ENCODE measurements at regions of chr6 and their contacts with region 1.

Region 1: GRCh38 chr6:170584181-170584953 is at the start of gene PDCD2:
- DNase-seq: peak; percentile 78 to 96 (median 92)
- ATAC-seq: peak; percentile 92
- H3K4me3 ChIP-seq: peak within 1 kb of the TSS; percentile 73 to 91
- H3K4me3 Mint-ChIP-seq: peak within 1 kb of the TSS; percentile 97
- H3K27ac ChIP-seq: peak within 1 kb of the TSS; percentile 77 to 89
- H3K27ac Mint-ChIP-seq: peak within 1 kb of the TSS; percentile 98
- H3K4me1 ChIP-seq: peaks cover 21% of the 10 kb centered on the region
- H3K4me1 Mint-ChIP-seq: peaks cover 33% of the 10 kb centered on the region
- H3K27me3 ChIP-seq: no peaks in the 10 kb centered on the region
- H3K27me3 Mint-ChIP-seq: no peaks in the 10 kb centered on the region
- CTCF ChIP-seq: no peak
- total RNA-seq, gene PDCD2: 43.9 to 46.3 TPM

Region 2: GRCh38 chr6:170464524-170464979 is 119.8 kb before region 1 on chr6:
- CTCF ChIA-PET with region 1: no interaction called
- POLR2A ChIA-PET with region 1: no interaction called
- intact Hi-C with region 1: loop called in 1 of 2 experiments (anchors 5 kb)
- DNase-seq: peak in 5 of 9 experiments; percentile 26 to 80 (median 48)
- ATAC-seq: peak; percentile 69
- H3K4me3 ChIP-seq: peak overlapping the region in 1 of 2 experiments; percentile 42
- H3K4me3 Mint-ChIP-seq: peak overlapping the region; percentile 51
- H3K27ac ChIP-seq: peak overlapping the region in 1 of 2 experiments; percentile 73
- H3K27ac Mint-ChIP-seq: no peak overlapping the region
- H3K4me1 ChIP-seq: peaks cover 43% of the 10 kb centered on the region
- H3K4me1 Mint-ChIP-seq: peaks cover 21% of the 10 kb centered on the region
- H3K27me3 ChIP-seq: no peaks in the 10 kb centered on the region
- H3K27me3 Mint-ChIP-seq: peaks cover 5% of the 10 kb centered on the region
- CTCF ChIP-seq: no peak

Region 3: DNA sequence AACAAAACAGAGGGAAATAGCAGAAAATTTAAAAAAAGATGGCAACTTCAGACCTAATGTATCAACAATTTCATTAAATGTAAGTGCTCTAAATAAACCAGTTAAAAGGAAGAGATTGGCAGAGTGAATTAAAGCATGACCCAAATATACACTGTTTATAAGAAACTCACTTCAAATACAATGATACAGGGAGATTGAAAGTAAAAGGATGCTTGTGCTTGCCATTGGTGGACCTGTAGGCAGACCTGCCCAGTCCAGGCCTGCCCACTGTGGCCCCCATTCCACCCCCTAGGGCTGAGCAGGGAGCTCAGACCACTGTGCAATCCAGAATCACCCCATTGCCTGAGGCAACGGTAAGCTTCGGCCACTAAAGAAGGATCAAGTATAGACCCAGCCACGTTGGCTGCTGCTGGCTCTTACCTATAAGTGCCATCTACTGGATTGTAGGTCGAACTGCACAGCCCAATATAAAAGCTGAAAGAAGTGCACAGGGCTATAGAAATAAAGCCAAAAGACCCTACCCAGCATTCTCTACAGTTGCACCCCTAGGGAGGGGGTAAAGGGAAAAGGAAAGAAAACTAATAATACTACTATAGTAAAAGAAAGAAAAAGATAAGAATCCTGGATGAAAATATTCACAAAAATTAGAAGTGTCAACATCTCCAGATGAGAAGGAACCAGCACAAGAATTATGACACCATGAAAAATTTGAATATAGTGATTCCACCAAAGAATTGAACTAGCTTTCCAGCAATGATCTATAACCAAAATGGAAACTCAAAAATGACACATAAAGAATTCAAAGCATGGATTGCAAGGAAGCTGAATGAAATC is 67.4 kb before region 1 on chr6:
- CTCF ChIA-PET with region 1: no interaction called
- POLR2A ChIA-PET with region 1: no interaction called
- intact Hi-C with region 1: no loop called
- DNase-seq: peak in 8 of 9 experiments; percentile 11 to 71 (median 35)
- ATAC-seq: peak; percentile 89
- H3K4me3 ChIP-seq: no peak overlapping the region
- H3K4me3 Mint-ChIP-seq: peak overlapping the region; percentile 58
- H3K27ac ChIP-seq: no peak overlapping the region
- H3K27ac Mint-ChIP-seq: no peak overlapping the region
- H3K4me1 ChIP-seq: no peaks in the 10 kb centered on the region
- H3K4me1 Mint-ChIP-seq: peaks cover 2% of the 10 kb centered on the region
- H3K27me3 ChIP-seq: no peaks in the 10 kb centered on the region
- H3K27me3 Mint-ChIP-seq: peaks cover 31% of the 10 kb centered on the region
- CTCF ChIP-seq: peak; percentile 87

Region 4: GRCh38 chr6:170554013-170554795 is 30.2 kb before region 1 on chr6 and contains the start of gene TBP:
- CTCF ChIA-PET with region 1: interaction called, 8 read pairs
- POLR2A ChIA-PET with region 1: interaction called, 33 read pairs
- intact Hi-C with region 1: loop called (anchors 1 kb)
- DNase-seq: peak; percentile 93 to 99 (median 98)
- ATAC-seq: peak; percentile 91
- H3K4me3 ChIP-seq: peak within 1 kb of the TSS; percentile 61 to 93
- H3K4me3 Mint-ChIP-seq: no peak within 1 kb of the TSS
- H3K27ac ChIP-seq: peak within 1 kb of the TSS; percentile 89 to 96
- H3K27ac Mint-ChIP-seq: no peak within 1 kb of the TSS
- H3K4me1 ChIP-seq: peaks cover 39% of the 10 kb centered on the region
- H3K4me1 Mint-ChIP-seq: peaks cover 38% of the 10 kb centered on the region
- H3K27me3 ChIP-seq: no peaks in the 10 kb centered on the region
- H3K27me3 Mint-ChIP-seq: no peaks in the 10 kb centered on the region
- CTCF ChIP-seq: no peak
- total RNA-seq, gene TBP: 13.8 to 13.9 TPM

Region 5: GRCh38 chr6:170572704-170573466 is 11.5 kb before region 1 on chr6:
- CTCF ChIA-PET with region 1: interaction called, 3 read pairs
- POLR2A ChIA-PET with region 1: interaction called, 11 read pairs
- intact Hi-C with region 1: no loop called
- DNase-seq: no peak
- ATAC-seq: no peak
- H3K4me3 ChIP-seq: no peak overlapping the region
- H3K4me3 Mint-ChIP-seq: no peak overlapping the region
- H3K27ac ChIP-seq: no peak overlapping the region
- H3K27ac Mint-ChIP-seq: peak overlapping the region; percentile 6
- H3K4me1 ChIP-seq: no peaks in the 10 kb centered on the region
- H3K4me1 Mint-ChIP-seq: peaks cover 2% of the 10 kb centered on the region
- H3K27me3 ChIP-seq: no peaks in the 10 kb centered on the region
- H3K27me3 Mint-ChIP-seq: no peaks in the 10 kb centered on the region
- CTCF ChIP-seq: no peak

Measured in CD8-positive, alpha-beta T cell (primary cell).